Activated naive CD4-positive, alpha-beta T cell treated with anti-CD3 and anti-CD28 coated beads, Interleukin-2, amount 10 ng/mL, durations not matched to agents 7 days and 5 days (primary cell): ENCODE measurements at regions of chr11 and their contacts with region 1.

Region 1: DNA sequence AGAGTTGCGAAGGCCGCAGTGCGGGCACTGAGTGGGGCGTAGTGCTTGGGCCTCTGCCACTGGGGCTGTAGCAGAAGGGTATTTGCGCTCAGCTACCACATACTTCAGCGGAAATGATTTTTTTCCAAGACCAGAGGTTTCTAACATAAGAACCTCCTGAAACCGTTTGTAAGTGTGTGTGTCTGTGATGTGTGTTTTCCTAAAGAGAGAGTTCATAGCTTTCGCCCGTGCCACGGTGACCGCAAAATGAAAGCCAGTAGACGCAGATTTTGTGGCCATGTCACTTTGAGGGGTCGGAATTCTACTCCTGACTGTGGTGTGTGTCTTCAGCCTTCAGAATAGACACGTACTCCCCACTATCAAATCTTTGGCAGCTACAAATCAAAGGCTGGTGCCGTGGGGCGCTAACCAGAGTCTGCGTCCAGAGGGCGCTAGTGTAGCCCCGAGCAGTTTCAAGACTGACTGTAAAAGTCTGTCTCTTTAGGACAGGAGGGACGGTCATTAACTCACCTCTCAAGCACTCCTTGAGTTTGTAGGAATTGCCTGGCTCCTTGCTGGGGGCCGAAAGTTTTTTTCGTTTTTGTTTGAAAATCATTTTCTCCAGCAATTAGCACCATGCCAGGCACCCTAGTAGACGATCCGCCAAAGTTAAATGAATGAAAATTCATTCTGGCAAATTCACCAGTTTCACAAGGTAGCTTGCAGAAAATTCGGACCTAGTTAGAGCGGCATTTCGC is 2.5 kb upstream of the CALCA start:
- DNase-seq: peak; percentile 76
- H3K4me3 Mint-ChIP-seq: peak overlapping the region; percentile 29
- H3K27ac Mint-ChIP-seq: no peak overlapping the region
- H3K4me1 Mint-ChIP-seq: peaks cover 32% of the 10 kb centered on the region
- H3K27me3 Mint-ChIP-seq: peaks cover 82% of the 10 kb centered on the region

Region 2: GRCh38 chr11:14954581-14954980 is 20.1 kb before region 1 on chr11:
- CTCF ChIA-PET with region 1: interaction called, 11 read pairs
- DNase-seq: no peak
- H3K4me3 Mint-ChIP-seq: no peak overlapping the region
- H3K27ac Mint-ChIP-seq: no peak overlapping the region
- H3K4me1 Mint-ChIP-seq: no peaks in the 10 kb centered on the region
- H3K27me3 Mint-ChIP-seq: peaks cover 4% of the 10 kb centered on the region

Region 3: DNA sequence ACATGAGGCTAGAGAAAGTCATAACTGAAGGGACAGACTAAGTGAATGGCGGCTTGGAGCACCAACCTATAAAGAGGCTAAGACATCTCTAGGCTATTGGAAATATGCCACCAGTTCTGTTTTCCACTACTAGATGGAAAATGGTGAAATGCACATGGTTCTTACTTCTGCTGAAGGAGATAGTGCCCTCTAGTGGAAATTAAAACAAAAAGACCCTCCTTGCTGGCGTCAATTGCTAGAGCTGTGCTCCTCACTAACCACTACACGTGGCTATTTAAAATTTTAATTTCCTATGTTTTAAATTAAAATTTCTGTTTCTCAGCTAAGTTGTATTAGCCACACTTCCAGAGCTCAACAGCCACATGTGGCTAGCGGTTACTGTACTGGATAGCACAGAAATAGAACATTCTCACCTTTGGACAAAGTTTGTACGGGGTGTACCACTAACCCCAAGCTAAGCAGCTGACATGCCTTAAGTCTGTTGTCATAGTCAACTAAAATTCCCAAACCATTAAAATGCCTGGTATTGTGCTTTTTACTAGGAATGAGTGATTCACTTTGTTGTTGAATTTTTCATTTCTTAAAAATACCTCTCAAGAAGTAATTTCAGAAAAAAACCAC is 31.6 kb after region 1 on chr11:
- CTCF ChIA-PET with region 1: interaction called, 37 read pairs
- DNase-seq: no peak
- H3K4me3 Mint-ChIP-seq: no peak overlapping the region
- H3K27ac Mint-ChIP-seq: no peak overlapping the region
- H3K4me1 Mint-ChIP-seq: no peaks in the 10 kb centered on the region
- H3K27me3 Mint-ChIP-seq: peaks cover 31% of the 10 kb centered on the region

Region 4: GRCh38 chr11:15074206-15075161 is 99.8 kb after region 1 on chr11:
- CTCF ChIA-PET with region 1: interaction called, 46 read pairs
- DNase-seq: peak; percentile 90
- H3K4me3 Mint-ChIP-seq: peak overlapping the region; percentile 72
- H3K27ac Mint-ChIP-seq: no peak overlapping the region
- H3K4me1 Mint-ChIP-seq: peaks cover 23% of the 10 kb centered on the region
- H3K27me3 Mint-ChIP-seq: peaks cover 61% of the 10 kb centered on the region

Region 5: DNA sequence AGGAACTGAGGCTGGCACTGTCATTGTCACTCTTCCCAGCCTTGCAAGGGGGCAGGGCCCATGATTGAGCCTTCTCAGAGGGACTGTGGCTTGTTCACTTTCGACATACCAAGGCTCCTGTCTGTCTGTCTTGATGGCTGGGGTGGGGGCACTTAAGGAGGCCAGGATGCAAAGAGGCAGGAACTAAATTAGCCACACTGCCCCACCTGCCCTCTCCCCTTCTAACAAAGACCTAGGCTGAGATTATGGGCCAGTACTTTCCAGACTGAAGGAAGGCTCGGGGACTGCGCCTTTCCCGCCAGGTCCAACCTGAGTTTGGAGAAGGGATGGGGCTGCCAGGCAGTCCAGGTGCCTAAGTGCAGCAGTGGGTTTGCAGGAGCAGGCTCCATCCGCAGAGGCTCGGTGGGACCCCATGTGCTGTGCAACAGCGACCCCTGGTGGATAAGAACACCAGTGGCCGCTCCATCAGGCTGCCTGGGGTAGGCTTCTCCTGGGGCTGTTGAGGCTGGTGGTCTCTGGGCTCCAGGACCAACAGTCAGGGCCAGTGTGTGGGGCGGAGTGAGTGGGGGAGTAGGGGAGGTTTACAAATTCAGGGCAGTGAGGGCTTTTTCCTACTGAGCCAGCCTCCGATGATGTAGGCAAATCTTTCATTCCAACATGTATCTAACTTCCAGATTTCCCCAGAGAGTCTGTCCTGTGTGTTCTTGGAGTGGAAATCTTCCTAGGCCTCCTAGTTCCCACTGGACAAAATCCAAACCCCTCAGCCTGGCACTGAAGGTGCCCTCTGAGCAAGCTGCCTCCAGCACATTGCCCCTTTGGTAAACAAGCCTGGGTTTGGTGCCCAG is 233.9 kb after region 1 on chr11:
- CTCF ChIA-PET with region 1: interaction called, 13 read pairs
- DNase-seq: peak; percentile 83
- H3K4me3 Mint-ChIP-seq: no peak overlapping the region
- H3K27ac Mint-ChIP-seq: no peak overlapping the region
- H3K4me1 Mint-ChIP-seq: no peaks in the 10 kb centered on the region
- H3K27me3 Mint-ChIP-seq: peaks cover 35% of the 10 kb centered on the region